PC-3 (cell line): ENCODE measurements at regions of chr1 and their contacts with region 1.

Region 1: DNA sequence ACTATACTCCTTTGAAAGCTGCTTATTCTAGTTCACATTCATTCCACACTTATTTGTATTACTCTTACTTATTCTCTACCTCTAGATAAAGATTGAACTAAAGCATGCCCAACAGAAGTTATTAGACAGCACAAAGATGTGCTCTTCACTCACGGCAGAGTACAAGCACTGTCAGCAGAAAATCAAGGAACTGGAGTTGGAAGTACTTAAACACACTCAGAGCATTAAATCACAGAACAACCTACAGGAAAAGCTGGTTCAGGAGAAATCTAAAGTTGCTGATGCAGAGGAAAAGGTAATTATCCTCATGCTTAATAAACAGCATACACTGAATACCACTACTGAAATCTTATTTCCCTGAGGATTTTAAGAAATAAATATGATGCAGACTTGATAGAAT is 81.3 kb upstream of the PPIH start:
- DNase-seq: no peak
- ATAC-seq: no peak
- H3K4me3 ChIP-seq: no peak overlapping the region
- H3K27ac ChIP-seq: no peak overlapping the region
- H3K4me1 ChIP-seq: no peaks in the 10 kb centered on the region
- H3K27me3 ChIP-seq: no peaks in the 10 kb centered on the region
- CTCF ChIP-seq: no peak

Region 2: DNA sequence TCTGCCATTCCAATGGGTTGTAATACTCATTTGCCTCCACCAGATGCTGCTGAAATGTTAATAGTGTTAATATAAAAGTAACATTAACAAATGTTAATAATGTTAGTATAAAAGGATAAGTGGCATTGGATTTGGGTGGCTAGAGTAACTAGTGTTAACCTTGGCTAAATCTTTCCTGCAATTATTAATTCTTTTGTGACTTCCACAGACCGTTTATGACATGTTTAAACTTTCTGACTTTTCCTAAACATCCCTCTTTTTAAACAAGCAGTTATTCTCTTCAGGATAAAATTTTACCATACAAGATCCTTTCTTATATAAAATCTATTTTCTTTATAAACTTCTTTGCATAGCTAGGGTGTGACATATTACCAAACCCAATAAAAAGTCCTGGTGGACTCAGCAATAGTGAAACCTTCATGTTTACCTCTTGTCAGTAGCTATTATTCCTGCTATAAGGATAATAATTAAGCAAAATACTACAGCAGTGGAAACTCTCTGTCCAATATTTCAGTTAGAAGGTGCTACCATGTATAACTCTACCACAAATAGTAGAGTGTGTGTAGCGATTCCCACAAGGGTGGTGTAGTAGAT is 72.3 kb before region 1 on chr1:
- CTCF ChIA-PET with region 1: no interaction called
- POLR2A ChIA-PET with region 1: no interaction called
- intact Hi-C with region 1: no loop called
- DNase-seq: peak; percentile 19
- ATAC-seq: no peak
- H3K4me3 ChIP-seq: no peak overlapping the region
- H3K27ac ChIP-seq: no peak overlapping the region
- H3K4me1 ChIP-seq: no peaks in the 10 kb centered on the region
- H3K27me3 ChIP-seq: no peaks in the 10 kb centered on the region
- CTCF ChIP-seq: 0 out of 2 replicates have a peak, but pooled peaks have one; percentile 11

Region 3: GRCh38 chr1:42730988-42731387 is 154.1 kb after region 1 on chr1:
- CTCF ChIA-PET with region 1: no interaction called
- POLR2A ChIA-PET with region 1: no interaction called
- intact Hi-C with region 1: loop called (anchors 1 kb)
- DNase-seq: peak; percentile 76
- ATAC-seq: peak; percentile 74
- H3K4me3 ChIP-seq: no peak overlapping the region
- H3K27ac ChIP-seq: no peak overlapping the region
- H3K4me1 ChIP-seq: no peaks in the 10 kb centered on the region
- H3K27me3 ChIP-seq: no peaks in the 10 kb centered on the region
- CTCF ChIP-seq: peak; percentile 65